ENCODE measurements at regions of chr9 and their contacts with region 1.

Region 1: DNA sequence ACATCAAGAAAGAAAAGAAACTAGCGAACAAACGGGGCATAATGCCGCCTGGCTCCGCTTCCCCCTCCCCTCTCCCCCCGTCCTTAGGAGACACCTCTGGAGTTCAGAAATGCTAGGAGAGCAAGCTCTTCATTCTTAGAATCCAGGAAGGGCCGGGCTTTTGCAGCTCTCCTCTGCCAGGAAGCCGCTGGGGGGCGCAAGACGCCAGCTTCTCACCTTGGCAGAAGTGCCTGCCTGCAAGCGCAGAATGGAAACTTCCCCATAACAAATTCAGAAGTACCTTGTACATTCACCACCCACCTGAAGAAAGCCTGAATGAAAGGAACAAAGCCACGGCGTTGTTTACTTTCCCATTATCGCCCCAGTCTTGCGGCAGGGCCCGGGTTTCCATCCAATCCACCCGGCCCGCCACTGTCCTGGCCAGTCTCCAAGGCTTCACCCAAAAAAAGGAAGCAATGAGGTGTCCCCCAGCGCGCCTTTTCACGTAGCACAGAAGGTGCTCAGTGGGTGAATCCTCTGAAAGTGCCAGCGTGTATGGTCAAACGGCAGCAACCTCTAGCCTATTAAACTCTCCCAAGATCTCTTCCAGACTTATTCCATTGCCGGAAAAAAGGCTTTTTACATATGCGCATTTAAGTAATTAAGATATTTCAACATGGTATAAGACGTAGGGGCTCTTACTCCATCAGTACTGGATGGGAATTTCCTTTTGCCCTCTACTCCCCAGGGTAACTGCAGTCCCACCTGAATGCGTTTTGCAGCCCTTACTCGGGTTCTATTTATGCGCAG is 1.6 kb upstream of the GADD45G start:
- ATAC-seq: peak in 3 of 8 experiments; percentile 30 to 62 (median 43)
- H3K4me3 ChIP-seq: peak overlapping the region; percentile 59 to 91 (median 78)
- H3K27ac ChIP-seq: no peak overlapping the region
- H3K4me1 ChIP-seq: peaks cover 12 to 20% of the 10 kb centered on the region in 2 donors

Region 2: DNA sequence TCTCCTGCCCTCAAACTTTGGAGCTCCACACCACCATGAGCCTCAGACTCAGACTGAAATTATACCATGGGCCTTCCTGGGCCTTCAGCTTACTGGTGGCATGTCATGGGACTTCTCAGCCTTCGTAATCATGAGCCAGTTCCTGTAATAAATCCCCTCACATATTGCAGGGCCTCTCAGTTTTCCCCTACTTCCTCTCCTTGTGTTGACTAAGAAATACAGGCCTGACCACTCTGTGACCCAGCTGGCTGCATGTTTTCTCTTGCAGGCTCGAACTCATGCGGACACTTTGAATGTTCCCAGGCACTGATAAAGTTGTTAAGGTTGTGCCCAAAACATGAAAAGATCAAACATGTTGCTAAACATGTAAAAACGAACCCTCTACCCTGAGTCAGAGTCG is 398.4 kb before region 1 on chr9:
- in situ Hi-C with region 1: no loop called
- ATAC-seq: no peak
- H3K4me3 ChIP-seq: no peak overlapping the region
- H3K27ac ChIP-seq: no peak overlapping the region
- H3K4me1 ChIP-seq: no peaks in the 10 kb centered on the region

Region 3: DNA sequence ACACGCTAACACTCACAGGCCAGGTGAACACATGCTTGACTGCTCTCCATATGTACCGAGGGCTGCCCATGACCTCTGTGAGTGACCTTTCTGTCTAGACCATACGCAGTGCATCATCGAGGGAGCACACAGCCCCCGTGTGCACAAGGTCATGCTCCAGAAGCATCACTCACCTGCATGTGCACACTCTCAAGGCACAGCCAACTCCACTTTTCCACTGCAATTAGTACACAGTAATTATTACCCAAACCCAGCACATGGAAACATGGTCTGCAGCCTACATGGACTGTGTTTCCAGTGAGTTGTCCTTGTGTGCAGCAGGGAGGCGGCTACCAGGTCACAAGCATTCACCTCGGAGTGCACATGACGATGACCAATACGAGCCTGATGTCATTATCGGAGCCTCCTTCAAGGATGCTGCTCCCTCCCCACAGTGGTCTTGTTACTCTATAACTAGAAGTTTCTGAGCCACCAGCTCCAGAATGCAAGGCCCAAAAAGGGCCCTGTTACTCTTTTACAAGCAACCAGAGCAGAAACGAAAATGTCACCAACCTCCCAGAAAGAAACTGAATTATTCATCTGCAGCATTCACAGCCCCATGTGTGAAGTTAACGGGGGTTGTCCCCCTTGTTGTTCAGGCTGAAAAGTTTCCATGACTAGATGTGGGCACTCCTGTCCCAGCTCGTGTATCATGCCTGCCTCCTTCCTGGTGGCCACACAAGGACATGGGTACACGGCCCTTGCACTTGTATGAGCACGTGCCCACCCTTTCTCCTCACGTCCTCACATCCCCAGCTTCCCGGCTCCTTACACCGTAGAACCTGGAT is 136.5 kb before region 1 on chr9:
- in situ Hi-C with region 1: no loop called
- ATAC-seq: peak in 5 of 8 experiments; percentile 81 to 92 (median 86)
- H3K4me3 ChIP-seq: no peak overlapping the region
- H3K27ac ChIP-seq: peak overlapping the region in 1 of 2 donors; percentile 40
- H3K4me1 ChIP-seq: peaks cover 45 to 46% of the 10 kb centered on the region in 2 donors

Region 4: GRCh38 chr9:89743573-89744361 is 140.6 kb after region 1 on chr9:
- in situ Hi-C with region 1: loop called in 1 of 9 experiments (anchors 25 kb)
- ATAC-seq: peak in 2 of 8 experiments; percentile 19
- H3K4me3 ChIP-seq: no peak overlapping the region
- H3K27ac ChIP-seq: no peak overlapping the region
- H3K4me1 ChIP-seq: peaks cover 16 to 29% of the 10 kb centered on the region in 2 donors

Region 5: GRCh38 chr9:90102292-90102901 is 499.2 kb after region 1 on chr9:
- in situ Hi-C with region 1: loop called (anchors 5 to 10 kb)
- ATAC-seq: peak; percentile 71 to 100 (median 87)
- H3K4me3 ChIP-seq: no peak overlapping the region
- H3K27ac ChIP-seq: no peak overlapping the region
- H3K4me1 ChIP-seq: peaks cover 9 to 17% of the 10 kb centered on the region in 2 donors

Region 6: GRCh38 chr9:90894986-90895687 is 1292.0 kb after region 1 on chr9:
- in situ Hi-C with region 1: loop called in 1 of 9 experiments (anchors 25 kb)
- ATAC-seq: peak in 3 of 8 experiments; percentile 57 to 74 (median 59)
- H3K4me3 ChIP-seq: no peak overlapping the region
- H3K27ac ChIP-seq: no peak overlapping the region
- H3K4me1 ChIP-seq: peaks cover 5 to 8% of the 10 kb centered on the region in 2 donors

Measured in motor neuron (in vitro differentiated cells).